ENCODE measurements at regions of chr1 and their contacts with region 1.

Region 1: DNA sequence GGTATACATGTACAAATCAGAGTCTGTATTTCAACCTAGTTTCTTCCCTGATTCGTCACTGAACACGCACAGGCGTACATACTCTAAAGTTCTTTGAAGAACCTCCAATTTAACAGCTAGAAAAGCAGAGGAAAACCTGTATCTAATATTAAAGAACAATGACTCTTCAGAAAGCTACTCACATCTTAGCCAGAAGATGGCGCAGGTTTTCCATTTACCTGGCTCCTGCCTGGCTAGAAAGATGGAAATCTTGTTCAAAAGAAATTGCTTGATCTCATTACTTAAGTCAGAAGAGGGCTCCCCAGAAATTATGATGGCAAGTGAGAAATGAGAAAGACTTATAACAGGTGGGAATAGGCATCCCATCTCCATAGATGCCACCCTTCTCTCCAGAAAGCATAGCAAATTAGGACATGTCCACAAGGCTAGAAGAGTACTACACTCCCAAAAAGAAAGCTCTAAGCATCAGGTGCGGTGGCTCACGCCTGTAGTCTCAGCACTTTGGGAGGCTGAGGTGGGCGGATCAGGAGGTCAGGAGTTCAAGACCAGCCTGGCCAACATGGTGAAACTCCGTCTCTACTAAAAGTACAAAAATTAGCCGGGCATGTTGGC is 19.0 kb upstream of the L1TD1 start:
- DNase-seq: peak; percentile 33
- H3K4me3 Mint-ChIP-seq: no peak overlapping the region
- H3K27ac Mint-ChIP-seq: no peak overlapping the region
- H3K4me1 Mint-ChIP-seq: no peaks in the 10 kb centered on the region
- H3K27me3 Mint-ChIP-seq: no peaks in the 10 kb centered on the region

Region 2: GRCh38 chr1:61851849-61852669 is 323.6 kb before region 1 on chr1:
- CTCF ChIA-PET with region 1: no interaction called
- POLR2A ChIA-PET with region 1: no interaction called
- intact Hi-C with region 1: no loop called
- DNase-seq: no peak
- H3K4me3 Mint-ChIP-seq: no peak overlapping the region
- H3K27ac Mint-ChIP-seq: no peak overlapping the region
- H3K4me1 Mint-ChIP-seq: no peaks in the 10 kb centered on the region
- H3K27me3 Mint-ChIP-seq: no peaks in the 10 kb centered on the region

Region 3: DNA sequence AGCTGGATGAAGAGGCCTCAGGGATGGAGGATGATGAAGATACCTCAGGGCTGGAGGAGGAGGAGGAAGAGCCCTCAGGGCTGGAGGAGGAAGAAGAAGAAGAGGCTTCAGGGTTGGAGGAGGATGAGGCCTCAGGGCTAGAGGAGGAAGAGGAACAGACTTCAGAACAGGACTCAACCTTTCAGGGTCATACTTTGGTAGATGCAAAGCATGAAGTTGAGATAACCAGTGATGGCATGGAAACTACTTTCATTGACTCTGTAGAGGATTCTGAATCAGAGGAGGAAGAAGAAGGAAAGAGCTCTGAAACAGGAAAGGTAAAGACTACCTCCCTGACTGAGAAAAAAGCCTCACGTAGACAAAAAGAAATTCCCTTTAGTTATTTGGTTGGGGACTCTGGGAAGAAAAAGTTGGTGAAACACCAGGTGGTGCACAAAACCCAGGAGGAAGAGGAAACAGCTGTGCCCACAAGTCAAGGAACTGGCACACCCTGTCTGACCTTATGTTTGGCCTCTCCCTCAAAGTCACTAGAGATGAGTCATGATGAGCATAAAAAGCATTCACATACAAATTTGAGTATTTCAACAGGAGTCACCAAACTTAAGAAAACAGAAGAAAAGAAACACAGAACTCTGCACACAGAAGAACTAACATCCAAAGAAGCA is 34.4 kb after region 1 on chr1:
- CTCF ChIA-PET with region 1: no interaction called
- POLR2A ChIA-PET with region 1: no interaction called
- intact Hi-C with region 1: no loop called
- DNase-seq: no peak
- H3K4me3 Mint-ChIP-seq: no peak overlapping the region
- H3K27ac Mint-ChIP-seq: no peak overlapping the region
- H3K4me1 Mint-ChIP-seq: no peaks in the 10 kb centered on the region
- H3K27me3 Mint-ChIP-seq: peaks cover 3% of the 10 kb centered on the region

Region 4: DNA sequence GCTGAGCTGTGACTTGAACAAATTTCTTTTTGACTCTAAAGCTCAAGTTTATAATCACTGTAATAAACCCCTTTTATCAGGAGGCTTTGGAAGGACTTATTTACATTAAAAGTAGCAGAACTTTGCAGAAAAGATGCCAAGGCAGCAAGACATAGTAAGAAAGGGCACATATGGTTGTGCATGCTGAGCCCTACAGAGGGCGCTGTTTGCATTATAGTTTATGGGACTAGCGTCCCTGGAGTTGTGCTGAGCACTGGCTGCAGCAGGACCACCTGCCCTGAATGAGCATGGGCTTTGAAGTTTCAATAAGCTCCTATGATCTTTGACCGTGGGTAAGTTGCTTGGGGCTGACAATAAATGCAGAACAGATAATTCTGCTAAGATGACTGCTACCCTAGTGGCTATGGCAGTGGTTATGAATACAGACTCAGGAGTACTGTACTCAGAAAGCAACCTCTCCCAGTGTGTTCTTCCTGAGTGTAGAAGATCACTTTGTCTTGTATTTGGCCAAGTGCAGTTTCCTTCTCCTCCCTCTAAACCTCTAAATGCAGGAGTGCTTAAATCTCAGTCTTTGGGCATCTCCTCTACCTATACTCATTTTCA is 215.8 kb after region 1 on chr1:
- CTCF ChIA-PET with region 1: interaction called, 3 read pairs
- POLR2A ChIA-PET with region 1: no interaction called
- intact Hi-C with region 1: loop called (anchors 5 kb)
- DNase-seq: peak; percentile 41
- H3K4me3 Mint-ChIP-seq: no peak overlapping the region
- H3K27ac Mint-ChIP-seq: no peak overlapping the region
- H3K4me1 Mint-ChIP-seq: no peaks in the 10 kb centered on the region
- H3K27me3 Mint-ChIP-seq: no peaks in the 10 kb centered on the region

Region 5: GRCh38 chr1:62407405-62408009 is 231.8 kb after region 1 on chr1:
- CTCF ChIA-PET with region 1: interaction called, 69 read pairs
- POLR2A ChIA-PET with region 1: no interaction called
- intact Hi-C with region 1: loop called (anchors 1 kb)
- DNase-seq: no peak
- H3K4me3 Mint-ChIP-seq: no peak overlapping the region
- H3K27ac Mint-ChIP-seq: no peak overlapping the region
- H3K4me1 Mint-ChIP-seq: no peaks in the 10 kb centered on the region
- H3K27me3 Mint-ChIP-seq: no peaks in the 10 kb centered on the region

Region 6: DNA sequence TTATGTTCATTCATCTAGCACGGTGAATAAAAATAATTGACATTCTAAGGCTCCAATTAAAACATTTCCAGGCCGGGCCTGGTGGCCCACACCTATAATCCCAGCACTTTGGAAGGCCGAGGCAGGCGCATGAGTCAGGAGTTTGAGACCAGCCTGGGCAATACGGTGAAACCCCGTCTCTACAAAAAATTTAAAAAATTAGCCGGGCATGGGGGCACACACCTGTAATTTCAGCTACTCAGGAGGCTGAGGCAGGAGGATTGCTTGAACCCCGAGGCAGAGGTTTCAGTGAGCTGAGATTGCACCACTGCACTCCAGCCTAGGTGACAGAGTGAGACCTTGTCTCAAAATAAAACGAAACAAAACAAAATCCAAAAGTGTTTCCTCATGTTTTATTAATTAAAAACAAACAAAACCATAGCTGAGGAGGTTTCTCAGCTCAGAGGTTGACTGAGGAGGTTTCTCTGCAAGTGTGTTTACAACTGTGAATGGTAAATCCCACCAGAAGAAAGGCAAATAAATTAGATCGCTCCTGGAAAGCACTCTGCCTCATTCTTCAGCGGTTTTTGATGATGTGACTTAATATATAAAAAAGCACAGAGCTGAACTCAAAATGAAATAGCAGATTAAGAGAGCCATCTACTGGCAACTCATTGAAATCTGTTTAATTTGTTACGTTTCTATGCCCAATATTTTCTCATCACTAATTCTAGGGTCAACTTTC is 570.6 kb after region 1 on chr1:
- CTCF ChIA-PET with region 1: interaction called, 28 read pairs
- POLR2A ChIA-PET with region 1: no interaction called
- intact Hi-C with region 1: loop called (anchors 2 kb)
- DNase-seq: no peak
- H3K4me3 Mint-ChIP-seq: no peak overlapping the region
- H3K27ac Mint-ChIP-seq: no peak overlapping the region
- H3K4me1 Mint-ChIP-seq: no peaks in the 10 kb centered on the region
- H3K27me3 Mint-ChIP-seq: peaks cover 4% of the 10 kb centered on the region

Measured in activated CD4-positive, alpha-beta memory T cell treated with anti-CD3 and anti-CD28 coated beads for 36 hours (primary cell).